A549 (cell line): ENCODE measurements at regions of chr11 and their contacts with region 1.

Region 1: GRCh38 chr11:60831143-60831500 is 10.8 kb upstream of the CCDC86 start:
- DNase-seq: peak; percentile 80 to 83
- ATAC-seq: peak; percentile 93 to 97
- H3K4me3 ChIP-seq: no peak overlapping the region
- H3K27ac ChIP-seq: no peak overlapping the region
- H3K4me1 ChIP-seq: no peaks in the 10 kb centered on the region
- CTCF ChIP-seq: peak; percentile 96
- EP300 ChIP-seq: no peak
- POLR2A ChIP-seq: no peak
- RAD21 ChIP-seq: peak; percentile 90 to 93

Region 2: DNA sequence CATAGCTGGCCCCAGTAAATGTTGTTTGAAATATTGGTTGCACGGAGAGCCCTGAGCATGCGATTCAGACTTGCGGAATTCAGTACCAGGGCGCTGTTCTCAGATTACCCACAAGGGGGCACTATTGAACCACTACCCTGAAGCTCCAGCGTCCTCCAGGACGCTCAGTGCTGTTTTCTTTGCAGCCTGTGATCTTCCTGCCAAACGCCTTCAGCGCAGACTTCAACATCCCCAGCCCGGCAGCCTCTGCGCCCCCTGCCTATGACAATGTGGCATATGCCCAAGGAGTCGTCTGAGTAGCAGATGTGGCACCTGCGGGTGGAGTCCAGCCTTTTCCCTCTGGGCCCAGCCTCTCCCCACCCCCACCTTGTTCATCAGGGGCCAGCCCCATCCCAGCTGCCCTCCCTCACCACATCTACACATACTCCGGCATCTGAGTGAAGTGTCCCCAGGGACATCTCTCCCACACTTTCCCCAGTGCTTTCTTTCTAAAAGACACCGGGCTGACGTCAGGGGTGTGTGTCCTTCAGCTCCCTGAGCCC is 55.6 kb before region 1 on chr11:
- CTCF ChIA-PET with region 1: interaction called, 14 read pairs
- POLR2A ChIA-PET with region 1: no interaction called
- DNase-seq: peak; percentile 83 to 88
- ATAC-seq: peak; percentile 71 to 93
- H3K4me3 ChIP-seq: no peak overlapping the region
- H3K27ac ChIP-seq: no peak overlapping the region
- H3K4me1 ChIP-seq: peaks cover 5% of the 10 kb centered on the region; the same call in 1 of the 3 replicates
- CTCF ChIP-seq: peak; percentile 86
- EP300 ChIP-seq: no peak
- POLR2A ChIP-seq: no peak
- RAD21 ChIP-seq: peak; percentile 79 to 82

Region 3: GRCh38 chr11:60841797-60842667 is 10.9 kb after region 1 on chr11 and contains the start of gene CCDC86:
- CTCF ChIA-PET with region 1: interaction called, 31 read pairs
- POLR2A ChIA-PET with region 1: no interaction called
- DNase-seq: peak; percentile 96 to 99
- ATAC-seq: peak; percentile 68 to 92
- H3K4me3 ChIP-seq: peak within 1 kb of the TSS; percentile 97
- H3K27ac ChIP-seq: peak within 1 kb of the TSS; percentile 87 to 94
- H3K4me1 ChIP-seq: peaks cover 18% of the 10 kb centered on the region; the same call in 1 of the 3 replicates
- CTCF ChIP-seq: no peak
- EP300 ChIP-seq: no peak
- POLR2A ChIP-seq: peak; percentile 62
- RAD21 ChIP-seq: no peak
- polyA plus RNA-seq, gene CCDC86: 39.8 and 42.8 TPM in 2 replicates

Region 4: DNA sequence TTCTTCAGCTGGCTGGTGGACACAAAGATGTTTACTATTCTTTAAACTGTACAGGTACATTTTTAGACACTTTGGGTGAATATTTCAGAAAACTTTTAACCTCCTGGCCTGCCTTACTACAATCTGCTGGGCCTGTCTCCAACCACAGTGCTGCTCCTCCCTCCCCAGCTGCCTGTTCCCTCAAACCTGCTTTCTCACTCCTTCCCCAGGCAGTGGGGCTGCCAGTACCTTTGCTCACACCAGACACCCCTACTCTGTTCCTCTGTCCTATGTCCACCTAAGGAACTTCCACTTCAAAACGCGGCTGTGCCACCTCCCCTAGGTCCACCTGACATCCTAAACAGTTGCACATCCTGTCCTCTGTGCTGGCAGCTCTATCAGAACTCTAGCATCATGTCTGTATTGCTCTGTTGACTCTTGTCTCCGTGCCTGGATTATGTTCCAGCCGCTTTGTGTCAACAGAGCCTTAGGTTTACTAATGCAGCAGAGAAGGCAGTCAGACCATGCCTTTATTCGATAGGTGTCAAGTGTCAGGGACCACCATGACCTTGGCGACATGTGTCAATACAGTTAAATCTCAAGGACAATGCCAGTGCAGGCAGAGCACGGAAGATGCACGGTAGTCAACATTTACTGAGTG is 49.6 kb after region 1 on chr11:
- CTCF ChIA-PET with region 1: interaction called, 79 read pairs
- POLR2A ChIA-PET with region 1: no interaction called
- DNase-seq: no peak
- ATAC-seq: no peak
- H3K4me3 ChIP-seq: no peak overlapping the region
- H3K27ac ChIP-seq: no peak overlapping the region
- H3K4me1 ChIP-seq: no peaks in the 10 kb centered on the region
- CTCF ChIP-seq: no peak
- EP300 ChIP-seq: no peak
- POLR2A ChIP-seq: no peak
- RAD21 ChIP-seq: no peak

Region 5: GRCh38 chr11:60906132-60906972 is 75.2 kb after region 1 on chr11 and contains the start of gene PRPF19:
- CTCF ChIA-PET with region 1: interaction called, 153 read pairs
- POLR2A ChIA-PET with region 1: no interaction called
- DNase-seq: peak; percentile 93 to 96
- ATAC-seq: peak; percentile 91 to 98
- H3K4me3 ChIP-seq: peak within 1 kb of the TSS; percentile 97
- H3K27ac ChIP-seq: peak within 1 kb of the TSS; percentile 90 to 97
- H3K4me1 ChIP-seq: peaks cover 12% of the 10 kb centered on the region
- CTCF ChIP-seq: no peak
- EP300 ChIP-seq: no peak
- POLR2A ChIP-seq: peak; percentile 83
- RAD21 ChIP-seq: no peak
- polyA plus RNA-seq, gene PRPF19: 41.1 and 51.7 TPM in 2 replicates

Region 6: GRCh38 chr11:61173456-61173855 is 342.3 kb after region 1 on chr11:
- CTCF ChIA-PET with region 1: interaction called, 13 read pairs
- POLR2A ChIA-PET with region 1: no interaction called
- DNase-seq: peak in 1 of 2 experiments; percentile 49
- ATAC-seq: peak; percentile 44 to 80; a peak in 4 of 6 replicates
- H3K4me3 ChIP-seq: no peak overlapping the region
- H3K27ac ChIP-seq: no peak overlapping the region
- H3K4me1 ChIP-seq: no peaks in the 10 kb centered on the region
- CTCF ChIP-seq: peak; percentile 27; the same call in 1 of the 3 replicates
- EP300 ChIP-seq: no peak
- POLR2A ChIP-seq: no peak
- RAD21 ChIP-seq: peak; percentile 50 to 59; a peak in 4 of 5 replicates